Activated B cell treated with CpG ODN at 0.5 μM for 24 hours (primary cell): ENCODE measurements at regions of chr19 and their contacts with region 1.

Region 1: DNA sequence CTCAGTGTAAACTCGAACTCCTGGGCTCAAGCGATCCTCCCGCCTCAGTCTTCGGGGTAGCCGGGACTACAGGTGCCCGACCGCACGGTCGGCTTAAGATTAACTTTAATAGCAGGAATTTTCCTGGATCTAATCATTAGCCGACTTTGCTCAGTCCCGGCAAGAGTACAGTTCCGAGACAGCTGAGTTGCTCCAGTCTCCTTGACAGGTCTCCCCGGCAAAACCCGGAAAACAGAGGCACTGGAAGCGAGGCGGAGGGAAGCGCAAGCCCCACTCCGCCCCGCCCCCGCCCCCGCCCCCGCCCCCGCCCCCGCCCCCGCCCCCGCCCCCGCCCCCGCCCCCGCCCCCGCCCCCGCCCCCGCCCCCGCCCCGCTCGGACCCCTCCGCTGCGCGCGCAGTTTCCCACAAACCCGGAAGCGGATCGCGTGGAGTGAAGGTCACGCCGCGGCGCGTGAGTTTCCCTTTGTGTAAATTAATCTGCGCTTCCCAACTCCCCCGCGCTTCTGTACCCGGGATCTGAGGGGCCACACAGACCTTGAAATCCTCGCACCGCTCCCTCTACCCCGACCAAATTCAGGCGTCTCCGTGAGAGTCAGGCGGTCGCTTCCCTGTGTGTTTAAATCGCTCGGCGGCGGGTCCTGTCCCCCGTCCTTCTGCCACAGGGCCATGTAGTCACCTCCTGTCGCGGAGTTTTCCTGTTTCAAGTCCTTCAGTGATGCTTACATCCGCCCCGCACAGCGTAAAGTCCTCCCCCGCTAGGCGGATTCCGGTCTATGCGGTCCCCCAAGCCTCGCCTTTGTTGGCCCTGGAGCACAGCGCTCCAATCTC is at the start of gene ZNF480:
- DNase-seq: peak; percentile 78
- ATAC-seq: peak; percentile 80
- H3K4me3 Mint-ChIP-seq: peak within 1 kb of the TSS; percentile 98
- H3K27ac Mint-ChIP-seq: peak within 1 kb of the TSS; percentile 98
- H3K4me1 Mint-ChIP-seq: peaks cover 21% of the 10 kb centered on the region
- H3K27me3 Mint-ChIP-seq: no peaks in the 10 kb centered on the region
- CTCF ChIP-seq: no peak
- total RNA-seq, gene ZNF480: 24.0 and 25.5 TPM in 2 replicates

Region 2: GRCh38 chr19:50341091-50341564 is 1955.9 kb before region 1 on chr19:
- CTCF ChIA-PET with region 1: no interaction called
- POLR2A ChIA-PET with region 1: interaction called, 10 read pairs
- intact Hi-C with region 1: no loop called
- DNase-seq: no peak
- ATAC-seq: peak; percentile 65
- H3K4me3 Mint-ChIP-seq: peak overlapping the region; percentile 81
- H3K27ac Mint-ChIP-seq: peak overlapping the region; percentile 92
- H3K4me1 Mint-ChIP-seq: peaks cover 81% of the 10 kb centered on the region
- H3K27me3 Mint-ChIP-seq: no peaks in the 10 kb centered on the region
- CTCF ChIP-seq: no peak

Region 3: DNA sequence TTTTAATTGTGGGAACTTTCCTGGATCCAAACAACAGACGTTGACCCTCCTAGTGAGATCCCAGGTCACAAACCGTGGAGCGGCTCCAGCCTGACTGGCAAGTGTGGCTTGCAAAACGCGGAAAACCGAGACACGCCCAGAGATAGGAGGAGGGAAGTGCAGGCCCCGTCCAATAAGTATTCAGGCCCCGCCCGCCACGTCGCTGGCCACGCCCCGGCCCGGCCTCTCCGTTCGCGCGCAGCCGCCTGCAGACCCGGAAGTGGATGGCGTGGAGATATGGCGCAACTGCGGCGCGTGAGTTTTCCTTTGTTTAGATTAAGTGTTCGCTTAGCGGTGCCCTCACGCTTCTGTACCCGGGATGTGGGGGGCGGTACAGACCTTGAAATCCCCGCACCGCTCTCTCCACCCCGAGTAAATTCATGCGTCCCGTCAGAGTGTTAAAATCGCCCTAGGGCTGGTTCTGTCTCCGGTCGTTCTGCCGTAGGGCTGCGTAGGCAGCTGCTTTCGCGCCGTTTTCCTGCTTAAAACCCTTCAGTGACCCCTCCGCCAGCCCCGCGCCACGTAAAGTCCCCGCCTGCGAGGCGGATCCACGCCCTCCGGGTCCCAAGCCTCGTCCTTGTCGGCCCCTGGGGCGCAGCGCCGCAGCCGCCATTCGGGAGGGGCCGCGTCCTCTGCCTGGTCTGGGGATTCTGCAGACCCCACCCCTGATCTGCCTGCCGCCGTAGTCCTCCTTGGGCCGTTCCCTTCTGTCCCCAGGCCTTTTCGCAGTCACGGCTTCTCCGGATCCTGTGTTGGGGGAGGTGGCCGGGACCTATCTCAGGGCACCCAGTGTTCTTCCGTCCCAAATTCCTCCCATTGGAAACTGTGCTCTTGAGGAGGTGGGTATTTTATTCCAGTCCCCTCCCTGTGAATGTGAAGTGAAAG is 27.4 kb before region 1 on chr19 and contains the start of gene ZNF766:
- CTCF ChIA-PET with region 1: no interaction called
- POLR2A ChIA-PET with region 1: interaction called, 6 read pairs
- intact Hi-C with region 1: loop called (anchors 1 kb)
- DNase-seq: peak; percentile 98
- ATAC-seq: peak; percentile 97
- H3K4me3 Mint-ChIP-seq: peak within 1 kb of the TSS; percentile 98
- H3K27ac Mint-ChIP-seq: peak within 1 kb of the TSS; percentile 94
- H3K4me1 Mint-ChIP-seq: peaks cover 45% of the 10 kb centered on the region
- H3K27me3 Mint-ChIP-seq: no peaks in the 10 kb centered on the region
- CTCF ChIP-seq: no peak
- total RNA-seq, gene ZNF766: 33.0 and 35.0 TPM in 2 replicates

Region 4: DNA sequence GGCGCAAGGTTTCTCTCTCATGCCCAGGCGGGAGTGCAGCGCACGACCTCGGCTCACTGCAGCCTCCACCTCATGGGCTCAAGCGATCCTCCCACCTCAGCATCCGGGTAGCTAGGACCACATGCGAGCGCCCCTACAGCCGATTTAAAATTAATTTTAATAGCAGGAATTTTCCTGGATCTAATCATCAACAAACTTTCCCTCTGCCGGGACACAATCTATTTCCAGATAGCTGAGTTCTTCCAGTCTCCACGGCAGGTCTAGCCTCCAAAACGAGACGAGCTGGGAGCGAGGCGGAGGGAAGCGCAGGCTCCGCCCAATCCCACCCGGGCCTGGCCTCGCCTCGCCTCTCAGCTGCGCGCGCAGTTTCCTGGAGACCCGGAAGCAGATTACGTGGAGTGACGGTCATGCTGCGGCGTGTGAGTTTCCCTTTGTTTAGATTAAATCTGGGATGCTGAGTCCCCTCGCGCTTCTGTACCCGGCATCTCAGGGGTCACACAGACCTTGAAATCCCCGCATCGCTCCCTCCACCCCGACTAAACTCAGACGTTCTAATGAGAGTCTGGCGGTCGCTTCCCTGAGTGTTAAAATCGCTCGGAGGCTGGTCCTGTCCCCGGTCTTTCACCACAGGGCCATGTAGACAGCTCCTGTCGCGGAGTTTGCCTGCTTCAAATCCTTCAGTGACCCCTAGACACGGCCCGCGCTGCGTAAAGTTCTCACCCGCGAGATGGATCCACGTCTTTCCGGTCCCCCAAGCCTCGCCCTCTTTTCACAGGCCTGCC is 72.8 kb after region 1 on chr19 and contains the start of gene ZNF880:
- CTCF ChIA-PET with region 1: no interaction called
- POLR2A ChIA-PET with region 1: no interaction called
- intact Hi-C with region 1: loop called (anchors 2 kb)
- DNase-seq: peak; percentile 86
- ATAC-seq: peak; percentile 98
- H3K4me3 Mint-ChIP-seq: peak within 1 kb of the TSS; percentile 95
- H3K27ac Mint-ChIP-seq: peak within 1 kb of the TSS; percentile 97
- H3K4me1 Mint-ChIP-seq: peaks cover 17% of the 10 kb centered on the region
- H3K27me3 Mint-ChIP-seq: no peaks in the 10 kb centered on the region
- CTCF ChIP-seq: no peak
- total RNA-seq, gene ZNF880: 28.0 and 29.5 TPM in 2 replicates

Region 5: DNA sequence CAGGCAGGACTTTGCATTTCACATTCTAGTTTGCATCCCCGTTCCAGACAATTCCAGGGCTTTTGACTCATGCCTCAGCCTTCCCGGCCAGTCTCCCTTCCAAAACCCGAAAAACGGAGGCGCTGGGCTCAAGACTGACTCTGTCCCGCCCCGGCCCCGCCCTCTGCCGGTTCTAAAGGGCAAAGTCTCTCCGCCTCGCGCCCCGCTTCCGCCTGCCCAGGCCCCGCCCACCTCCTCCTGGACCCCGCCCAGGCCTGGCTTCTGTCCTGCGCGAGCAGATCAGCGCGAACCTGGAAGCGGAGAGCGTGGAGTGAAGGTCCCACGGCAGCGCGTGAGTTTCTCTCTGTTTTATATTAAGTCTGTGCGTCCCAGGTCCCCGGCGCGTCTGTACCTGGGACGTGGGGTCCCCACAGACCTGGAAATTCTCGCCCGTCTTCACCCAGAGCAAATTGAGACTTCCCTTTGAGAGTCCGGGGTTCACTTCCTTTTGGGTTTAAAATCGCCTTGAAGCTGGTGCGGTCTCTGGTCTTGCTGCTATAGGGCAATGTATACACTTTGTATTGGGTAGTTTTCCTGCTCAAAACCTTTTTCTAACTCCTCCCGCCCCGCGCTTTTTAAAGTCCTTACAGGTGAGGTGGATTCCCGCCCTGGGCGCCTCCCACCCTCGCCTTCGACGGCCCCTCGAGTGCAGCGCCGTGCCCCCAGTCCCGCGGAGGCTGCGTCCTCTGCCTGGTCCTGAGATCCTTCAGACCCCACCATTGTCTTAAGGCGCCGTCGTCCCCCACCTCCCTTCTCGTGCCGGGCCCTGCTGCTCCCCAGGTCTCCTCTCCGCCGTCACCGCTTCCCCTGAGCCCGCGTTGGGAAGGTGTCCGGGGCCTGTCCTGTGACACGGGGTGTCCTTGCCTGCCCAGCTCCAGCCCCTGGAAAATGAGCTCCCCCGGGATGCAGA is 304.3 kb after region 1 on chr19:
- CTCF ChIA-PET with region 1: no interaction called
- POLR2A ChIA-PET with region 1: no interaction called
- intact Hi-C with region 1: loop called (anchors 1 kb)
- DNase-seq: peak; percentile 95
- ATAC-seq: peak; percentile 99
- H3K4me3 Mint-ChIP-seq: peak overlapping the region; percentile 93
- H3K27ac Mint-ChIP-seq: peak overlapping the region; percentile 86
- H3K4me1 Mint-ChIP-seq: peaks cover 26% of the 10 kb centered on the region
- H3K27me3 Mint-ChIP-seq: no peaks in the 10 kb centered on the region
- CTCF ChIP-seq: no peak